Activated CD4-positive, alpha-beta T cell treated with anti-CD3 and anti-CD28 coated beads for 36 hours (primary cell): ENCODE measurements at regions of chr1 and their contacts with region 1.

Region 1: GRCh38 chr1:206575165-206575893 is 36.9 kb downstream of the EIF2D start:
- DNase-seq: peak; percentile 53
- ATAC-seq: peak; percentile 13
- H3K4me3 Mint-ChIP-seq: peak overlapping the region; percentile 59
- H3K27ac Mint-ChIP-seq: peak overlapping the region; percentile 99
- H3K4me1 Mint-ChIP-seq: peaks cover 99% of the 10 kb centered on the region
- H3K27me3 Mint-ChIP-seq: no peaks in the 10 kb centered on the region

Region 2: GRCh38 chr1:206551986-206552326 is 23.4 kb before region 1 on chr1:
- CTCF ChIA-PET with region 1: interaction called, 621 read pairs
- POLR2A ChIA-PET with region 1: interaction called, 51 read pairs
- intact Hi-C with region 1: loop called in 1 of 2 experiments (anchors 2 kb)
- DNase-seq: peak; percentile 91
- ATAC-seq: peak; percentile 84
- H3K4me3 Mint-ChIP-seq: peak overlapping the region; percentile 61
- H3K27ac Mint-ChIP-seq: peak overlapping the region; percentile 98
- H3K4me1 Mint-ChIP-seq: peaks cover 62% of the 10 kb centered on the region
- H3K27me3 Mint-ChIP-seq: no peaks in the 10 kb centered on the region

Region 3: DNA sequence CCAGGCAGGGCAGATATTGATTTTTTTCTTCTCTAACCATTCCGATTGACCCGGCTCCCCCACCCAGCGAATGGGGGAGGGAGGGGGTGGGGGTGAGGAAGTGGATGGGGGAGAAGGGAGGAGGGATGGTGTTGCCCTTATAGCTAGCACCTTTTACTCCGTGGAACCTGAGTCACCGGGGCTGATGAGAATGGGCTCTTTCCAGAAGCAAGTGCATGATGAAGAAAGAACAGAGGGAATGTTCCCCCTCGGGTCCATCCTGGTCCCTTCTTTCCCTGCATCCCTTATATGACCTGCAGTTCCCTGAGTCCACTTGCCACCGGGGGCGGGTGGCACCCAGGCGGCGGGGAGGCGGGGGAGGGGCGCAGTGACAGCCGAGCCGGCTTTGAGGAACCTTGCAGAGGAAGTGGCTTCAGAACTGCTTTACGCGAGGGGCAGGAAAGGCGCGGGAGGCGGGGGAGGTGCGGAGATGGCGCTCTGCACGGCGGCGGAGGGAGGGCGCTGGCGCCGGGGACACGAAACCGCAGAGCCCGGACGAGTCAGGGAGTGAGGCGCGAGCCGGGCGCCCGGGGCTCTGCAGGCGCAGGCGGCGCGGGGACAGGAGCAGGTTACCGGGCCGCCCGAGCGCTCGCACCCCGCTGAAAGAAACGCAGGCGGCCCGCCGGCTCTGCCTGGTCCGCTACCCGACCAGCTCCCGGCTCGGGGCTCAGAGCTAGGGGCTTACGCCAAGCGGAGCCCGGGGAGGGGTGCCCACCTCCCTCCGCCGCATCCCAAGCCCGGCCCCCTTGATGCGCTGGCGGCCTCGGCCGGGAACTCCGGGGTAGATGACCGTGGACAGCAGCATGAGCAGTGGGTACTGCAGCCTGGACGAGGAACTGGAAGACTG is 18.3 kb before region 1 on chr1:
- CTCF ChIA-PET with region 1: interaction called, 621 read pairs
- POLR2A ChIA-PET with region 1: interaction called, 129 read pairs
- intact Hi-C with region 1: loop called in 1 of 2 experiments (anchors 2 kb)
- DNase-seq: peak; percentile 95
- ATAC-seq: peak; percentile 43
- H3K4me3 Mint-ChIP-seq: peak overlapping the region; percentile 95
- H3K27ac Mint-ChIP-seq: peak overlapping the region; percentile 99
- H3K4me1 Mint-ChIP-seq: peaks cover 66% of the 10 kb centered on the region
- H3K27me3 Mint-ChIP-seq: no peaks in the 10 kb centered on the region

Region 4: DNA sequence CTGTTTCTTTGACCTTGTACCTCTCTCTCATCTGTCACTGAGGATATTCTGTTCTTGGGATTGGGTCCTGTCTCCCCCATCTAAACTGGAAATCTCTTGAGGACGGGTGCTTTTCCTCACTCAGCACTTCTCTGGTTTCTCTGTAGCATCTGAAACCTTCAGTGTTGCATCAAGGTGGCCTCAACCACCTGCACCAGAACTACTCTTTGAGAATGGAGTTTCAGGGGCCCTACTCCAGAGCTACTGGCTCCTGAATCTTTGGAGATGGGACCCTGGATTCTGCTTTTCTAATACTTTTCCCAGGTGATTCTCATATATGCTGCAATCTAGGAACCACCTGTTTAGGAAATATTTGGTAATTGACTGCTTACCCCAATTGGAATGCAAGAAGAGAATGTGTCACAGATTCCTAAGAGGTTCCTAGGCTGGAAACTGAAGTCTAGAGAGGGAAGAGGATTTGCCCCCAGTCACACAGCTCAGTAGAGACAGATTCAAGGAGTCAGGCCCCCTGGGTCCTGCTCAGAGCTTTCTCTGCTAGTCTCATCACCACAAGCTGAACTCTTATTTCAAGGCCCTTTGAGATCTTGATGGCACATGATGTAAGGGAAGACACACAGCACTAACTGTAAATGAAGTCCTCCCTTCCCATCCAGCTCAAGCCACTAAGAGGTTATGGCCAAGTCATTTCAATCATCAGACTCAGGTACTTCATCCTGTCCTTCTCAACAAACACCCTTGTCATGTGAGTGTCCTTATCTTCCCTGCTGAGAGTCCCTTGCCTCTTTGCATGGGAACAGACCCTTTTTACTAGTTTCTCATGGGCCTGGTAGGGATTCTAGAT is 11.7 kb before region 1 on chr1:
- CTCF ChIA-PET with region 1: interaction called, 621 read pairs
- POLR2A ChIA-PET with region 1: interaction called, 129 read pairs
- intact Hi-C with region 1: loop called (anchors 1 kb)
- DNase-seq: peak; percentile 22
- ATAC-seq: peak; percentile 4
- H3K4me3 Mint-ChIP-seq: peak overlapping the region; percentile 95
- H3K27ac Mint-ChIP-seq: peak overlapping the region; percentile 99
- H3K4me1 Mint-ChIP-seq: peaks cover 87% of the 10 kb centered on the region
- H3K27me3 Mint-ChIP-seq: no peaks in the 10 kb centered on the region

Region 5: GRCh38 chr1:207897188-207897587 is 1321.9 kb after region 1 on chr1:
- CTCF ChIA-PET with region 1: no interaction called
- POLR2A ChIA-PET with region 1: no interaction called
- intact Hi-C with region 1: no loop called
- DNase-seq: no peak
- ATAC-seq: no peak
- H3K4me3 Mint-ChIP-seq: no peak overlapping the region
- H3K27ac Mint-ChIP-seq: no peak overlapping the region
- H3K4me1 Mint-ChIP-seq: no peaks in the 10 kb centered on the region
- H3K27me3 Mint-ChIP-seq: no peaks in the 10 kb centered on the region